ENCODE measurements at regions of chr3 and their contacts with region 1.

Region 1: DNA sequence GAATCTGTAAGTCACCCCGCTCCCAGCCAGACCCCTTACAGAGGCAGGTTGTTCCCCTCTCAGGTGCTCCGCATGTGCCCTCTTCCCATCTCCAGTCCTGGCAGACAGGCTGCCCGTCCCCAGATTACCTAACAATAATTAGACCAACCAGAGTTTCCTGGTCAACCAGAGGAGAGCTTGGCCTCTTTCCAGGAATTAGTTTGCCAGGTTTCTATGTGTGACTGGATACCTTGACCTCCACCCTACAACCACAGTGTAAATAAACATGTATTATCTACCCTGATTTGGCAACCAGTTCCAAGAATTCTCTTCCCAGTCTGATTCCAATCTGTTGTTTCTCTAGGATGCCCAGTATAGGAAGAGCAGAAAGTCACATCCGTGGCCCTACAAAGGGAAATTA is 178.0 kb upstream of the UMPS start:
- DNase-seq: peak; percentile 22
- H3K4me3 ChIP-seq: no peak overlapping the region
- H3K27ac ChIP-seq: no peak overlapping the region
- H3K4me1 ChIP-seq: peaks cover 11% of the 10 kb centered on the region
- H3K27me3 ChIP-seq: no peaks in the 10 kb centered on the region
- CTCF ChIP-seq: no peak
- POLR2A ChIP-seq: no peak

Region 2: DNA sequence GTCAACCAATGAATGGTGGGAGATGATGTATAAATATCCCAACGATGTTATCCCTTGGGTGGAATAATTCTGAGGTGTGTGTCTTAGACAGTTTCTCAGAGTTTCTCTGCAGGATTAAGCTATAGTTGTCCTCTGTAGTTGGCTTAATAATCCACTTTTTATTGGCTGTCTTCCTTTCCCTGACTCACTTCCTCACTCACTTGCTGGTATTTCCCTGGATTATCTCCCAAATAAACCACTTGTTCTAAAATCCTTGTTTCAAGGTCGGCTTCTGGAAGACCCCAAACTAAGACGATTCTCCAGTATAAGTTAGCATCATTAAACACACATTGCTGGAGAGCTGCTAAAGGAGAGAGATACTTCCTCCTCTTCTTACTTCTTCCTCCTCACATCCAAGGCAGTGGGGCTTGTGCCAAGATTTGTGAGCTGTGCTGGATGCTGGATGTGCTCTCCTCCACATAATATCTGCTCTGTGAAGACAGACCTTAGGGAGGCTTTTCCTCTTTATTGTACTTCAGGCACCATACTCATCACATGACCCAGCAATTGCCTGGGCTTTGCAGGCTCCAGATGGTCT is 537.8 kb before region 1 on chr3:
- CTCF ChIA-PET with region 1: interaction called, 16 read pairs
- POLR2A ChIA-PET with region 1: no interaction called
- dilution Hi-C with region 1: no loop called
- intact Hi-C with region 1: loop called (anchors 1 kb)
- DNase-seq: peak; percentile 23
- H3K4me3 ChIP-seq: no peak overlapping the region
- H3K27ac ChIP-seq: no peak overlapping the region
- H3K4me1 ChIP-seq: peaks cover 7% of the 10 kb centered on the region
- H3K27me3 ChIP-seq: peaks cover 0 to 5% of the 10 kb centered on the region in 2 experiments
- CTCF ChIP-seq: no peak
- POLR2A ChIP-seq: no peak

Region 3: DNA sequence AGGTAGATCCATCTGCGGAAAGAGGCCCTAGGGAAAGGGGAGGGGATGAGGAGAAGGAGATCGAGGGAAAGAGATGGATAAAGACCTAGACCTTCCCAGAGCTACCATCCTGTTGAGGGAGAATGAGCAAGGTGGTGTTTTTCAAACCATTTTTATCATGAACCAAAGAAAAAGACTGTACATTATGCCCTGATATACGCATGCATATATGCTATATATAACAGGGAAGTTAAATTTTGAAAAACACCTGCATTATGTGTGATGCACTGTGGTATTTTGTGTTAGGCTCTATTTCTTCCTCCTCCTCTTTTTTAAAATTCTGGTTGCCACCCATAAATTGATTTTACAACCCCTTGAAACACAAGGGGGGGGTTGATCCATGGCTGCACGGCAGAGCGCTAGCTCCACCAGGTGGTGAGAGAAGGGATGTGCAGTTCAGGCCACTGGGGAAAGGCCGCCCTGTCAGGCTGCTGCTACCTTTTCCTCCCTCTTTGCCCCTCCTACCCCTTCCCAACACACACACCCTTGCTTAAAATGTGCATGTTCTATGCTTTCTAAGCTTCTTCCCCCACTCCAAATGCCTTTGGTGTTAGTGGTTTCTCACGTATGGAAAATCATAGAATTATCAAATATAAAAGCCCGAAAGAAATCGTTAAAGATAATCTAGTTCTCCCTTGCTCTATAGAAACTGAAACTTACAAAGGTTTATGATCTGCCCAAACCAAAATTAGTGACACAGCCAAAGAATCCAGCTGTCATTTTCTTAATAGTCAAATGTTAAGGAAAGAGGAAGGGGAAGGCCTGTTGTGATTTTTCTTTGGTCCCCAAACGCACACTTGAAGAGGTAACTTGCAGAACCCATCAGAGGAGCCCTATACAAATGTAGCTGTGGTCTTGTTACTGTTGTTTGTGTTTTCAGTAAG is 84.0 kb before region 1 on chr3:
- CTCF ChIA-PET with region 1: interaction called, 4 read pairs
- POLR2A ChIA-PET with region 1: no interaction called
- dilution Hi-C with region 1: no loop called
- intact Hi-C with region 1: loop called (anchors 2 kb)
- DNase-seq: peak; percentile 58
- H3K4me3 ChIP-seq: no peak overlapping the region
- H3K27ac ChIP-seq: no peak overlapping the region
- H3K4me1 ChIP-seq: no peaks in the 10 kb centered on the region
- H3K27me3 ChIP-seq: peaks cover 0 to 2% of the 10 kb centered on the region in 2 experiments
- CTCF ChIP-seq: peak; percentile 91 to 97
- POLR2A ChIP-seq: no peak

Region 4: GRCh38 chr3:124492811-124493210 is 59.4 kb before region 1 on chr3:
- CTCF ChIA-PET with region 1: interaction called, 8 read pairs
- POLR2A ChIA-PET with region 1: no interaction called
- dilution Hi-C with region 1: no loop called
- intact Hi-C with region 1: loop called (anchors 1 kb)
- DNase-seq: peak; percentile 35
- H3K4me3 ChIP-seq: no peak overlapping the region
- H3K27ac ChIP-seq: no peak overlapping the region
- H3K4me1 ChIP-seq: no peaks in the 10 kb centered on the region
- H3K27me3 ChIP-seq: no peaks in the 10 kb centered on the region
- CTCF ChIP-seq: peak; percentile 12 to 36
- POLR2A ChIP-seq: no peak

Region 5: DNA sequence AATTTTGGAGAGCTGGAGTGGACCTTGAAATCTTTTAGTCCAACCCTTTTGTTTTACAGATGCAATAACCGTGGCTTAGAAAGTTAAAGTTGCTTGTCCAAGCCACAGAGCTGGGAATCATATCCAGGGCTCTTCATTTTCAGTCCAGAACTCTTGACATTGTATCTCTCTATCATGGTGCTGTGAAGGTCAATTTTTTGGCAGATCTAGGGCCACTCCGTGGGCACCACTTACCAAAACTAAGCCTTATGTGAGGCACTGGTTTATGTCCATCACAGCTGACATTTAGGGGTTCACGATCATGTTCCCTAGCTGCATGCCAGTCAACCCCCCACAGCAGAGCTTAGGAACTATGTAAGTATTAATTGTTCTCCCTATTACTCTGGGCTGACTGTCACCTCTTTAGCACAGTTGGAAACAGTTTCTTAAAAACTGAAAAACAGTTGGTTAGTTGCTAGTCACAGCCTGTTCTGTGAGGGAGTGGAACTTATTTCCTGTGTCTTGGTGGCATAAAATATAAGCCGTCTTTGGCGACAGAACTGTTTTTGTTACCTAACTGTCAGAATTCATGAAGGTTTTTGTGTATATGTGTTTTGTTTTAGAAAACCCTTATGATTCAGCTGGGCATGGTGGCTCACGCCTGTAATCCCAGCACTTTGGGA is 11.6 kb before region 1 on chr3:
- CTCF ChIA-PET with region 1: interaction called, 13 read pairs
- POLR2A ChIA-PET with region 1: no interaction called
- dilution Hi-C with region 1: no loop called
- intact Hi-C with region 1: no loop called
- DNase-seq: no peak
- H3K4me3 ChIP-seq: no peak overlapping the region
- H3K27ac ChIP-seq: no peak overlapping the region
- H3K4me1 ChIP-seq: no peaks in the 10 kb centered on the region
- H3K27me3 ChIP-seq: peaks cover 0 to 9% of the 10 kb centered on the region in 2 experiments
- CTCF ChIP-seq: no peak
- POLR2A ChIP-seq: no peak